Head of caudate nucleus (tissue), 42 donors: ENCODE measurements at regions of chr19 and their contacts with region 1.

Region 1: DNA sequence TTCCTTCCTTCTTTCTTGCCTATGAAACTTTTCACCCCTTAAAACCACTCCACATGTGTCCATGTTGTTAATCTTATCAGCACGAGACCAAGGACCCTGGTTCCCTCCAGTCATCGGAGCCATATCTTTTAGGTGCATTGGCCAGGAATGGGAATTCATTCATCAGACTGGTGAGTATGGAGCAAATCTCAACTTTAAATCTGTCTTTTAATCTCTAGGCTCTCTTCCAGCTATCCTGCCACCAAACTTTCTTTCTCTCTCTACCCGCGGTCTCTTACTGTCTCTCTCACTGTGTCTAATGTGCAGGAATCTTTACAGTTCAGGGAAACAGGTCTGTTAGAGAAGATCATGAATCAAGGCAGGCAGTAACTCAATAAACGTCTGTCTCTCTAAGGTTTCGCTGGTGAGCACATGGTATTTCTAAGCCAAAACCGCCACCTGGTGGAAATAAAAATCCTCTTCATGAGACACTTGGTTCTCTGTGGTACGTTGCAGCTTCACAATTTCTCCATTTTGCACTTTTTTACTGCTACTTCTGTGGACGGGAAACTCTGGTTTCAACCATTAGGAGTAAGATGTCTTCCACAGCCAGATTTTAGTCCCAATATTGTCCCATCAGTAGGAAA is 16.1 kb downstream of the LGALS16 start:
- DNase-seq: peak in 27 of 42 donors; percentile 8 to 75 (median 46)

Region 2: DNA sequence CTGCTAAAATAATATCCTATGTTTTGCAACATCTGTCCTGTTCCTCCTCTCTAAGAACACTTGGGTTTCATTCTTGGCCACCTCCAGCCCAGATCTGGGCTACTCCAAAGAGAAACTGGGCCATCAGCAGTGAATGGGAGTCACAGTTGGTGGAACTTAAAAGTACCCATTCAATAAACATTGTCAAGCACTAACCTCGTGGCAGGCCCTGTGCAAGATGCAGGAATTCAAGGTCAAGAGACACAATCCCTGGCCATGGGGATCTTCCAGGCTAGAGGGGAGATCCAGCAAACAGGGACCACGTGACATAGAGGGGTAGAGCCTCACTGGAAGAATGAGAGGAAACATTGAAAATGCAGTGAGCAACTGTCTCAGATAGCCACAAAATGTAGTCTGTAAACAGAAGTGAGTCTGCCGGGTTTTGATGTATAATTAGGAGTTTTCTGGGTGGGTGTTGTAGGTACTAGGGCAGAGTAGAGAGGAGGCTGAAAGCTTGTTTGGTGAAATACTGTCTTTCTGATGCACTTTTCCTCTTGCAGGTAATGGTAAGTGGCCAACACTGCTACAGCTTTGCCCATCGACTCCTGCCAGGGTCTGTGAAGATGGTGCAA is 117.0 kb before region 1 on chr19:
- intact Hi-C with region 1: loop called (anchors 5 kb)
- DNase-seq: no peak